ENCODE measurements at regions of chr9 and their contacts with region 1.

Region 1: GRCh38 chr9:69645488-69645887 is 26.7 kb downstream of the APBA1 start:
- DNase-seq: no peak
- H3K4me3 ChIP-seq: no peak overlapping the region
- H3K27ac ChIP-seq: no peak overlapping the region
- H3K4me1 ChIP-seq: no peaks in the 10 kb centered on the region
- H3K27me3 ChIP-seq: peaks cover 0 to 4% of the 10 kb centered on the region in 2 experiments
- CTCF ChIP-seq: no peak
- POLR2A ChIP-seq: no peak

Region 2: GRCh38 chr9:69633716-69634115 is 11.8 kb before region 1 on chr9:
- CTCF ChIA-PET with region 1: no interaction called
- POLR2A ChIA-PET with region 1: no interaction called
- dilution Hi-C with region 1: no loop called
- intact Hi-C with region 1: loop called (anchors 1 kb)
- DNase-seq: no peak
- H3K4me3 ChIP-seq: no peak overlapping the region
- H3K27ac ChIP-seq: no peak overlapping the region
- H3K4me1 ChIP-seq: peaks cover 9% of the 10 kb centered on the region
- H3K27me3 ChIP-seq: no peaks in the 10 kb centered on the region
- CTCF ChIP-seq: no peak
- POLR2A ChIP-seq: no peak

Region 3: DNA sequence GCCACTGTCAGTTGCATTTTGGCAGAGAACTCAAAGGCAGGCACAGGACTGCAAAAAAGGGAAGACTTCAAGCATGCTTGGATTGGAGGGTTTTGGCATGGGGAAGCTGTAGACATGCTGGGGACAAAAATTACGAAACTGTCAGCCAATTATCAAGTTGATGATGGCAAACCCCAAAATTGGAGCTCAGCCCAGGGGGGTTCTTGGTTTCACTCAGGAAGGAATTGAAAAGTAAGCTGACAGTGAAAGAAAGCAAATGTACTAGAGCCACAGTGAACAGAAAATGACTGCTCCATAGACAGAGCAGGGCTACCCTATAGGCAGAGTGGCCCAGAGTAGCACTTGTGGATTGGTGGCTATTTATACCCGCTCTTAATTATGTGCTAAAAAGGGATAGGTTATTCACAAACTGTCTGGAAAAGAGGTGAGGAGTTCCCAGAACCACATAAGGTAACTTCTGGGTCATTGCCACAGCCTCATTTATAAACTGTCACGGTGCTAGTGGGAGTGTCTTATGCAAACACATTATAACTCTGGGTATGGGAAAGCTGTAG is 160.6 kb after region 1 on chr9:
- CTCF ChIA-PET with region 1: no interaction called
- POLR2A ChIA-PET with region 1: no interaction called
- dilution Hi-C with region 1: no loop called
- intact Hi-C with region 1: no loop called
- DNase-seq: no peak
- H3K4me3 ChIP-seq: no peak overlapping the region
- H3K27ac ChIP-seq: no peak overlapping the region
- H3K4me1 ChIP-seq: no peaks in the 10 kb centered on the region
- H3K27me3 ChIP-seq: peaks cover 21 to 22% of the 10 kb centered on the region in 2 experiments
- CTCF ChIP-seq: no peak
- POLR2A ChIP-seq: no peak

Measured in endothelial cell of umbilical vein (primary cell).